ENCODE measurements at regions of chr14 and their contacts with region 1.

Region 1: DNA sequence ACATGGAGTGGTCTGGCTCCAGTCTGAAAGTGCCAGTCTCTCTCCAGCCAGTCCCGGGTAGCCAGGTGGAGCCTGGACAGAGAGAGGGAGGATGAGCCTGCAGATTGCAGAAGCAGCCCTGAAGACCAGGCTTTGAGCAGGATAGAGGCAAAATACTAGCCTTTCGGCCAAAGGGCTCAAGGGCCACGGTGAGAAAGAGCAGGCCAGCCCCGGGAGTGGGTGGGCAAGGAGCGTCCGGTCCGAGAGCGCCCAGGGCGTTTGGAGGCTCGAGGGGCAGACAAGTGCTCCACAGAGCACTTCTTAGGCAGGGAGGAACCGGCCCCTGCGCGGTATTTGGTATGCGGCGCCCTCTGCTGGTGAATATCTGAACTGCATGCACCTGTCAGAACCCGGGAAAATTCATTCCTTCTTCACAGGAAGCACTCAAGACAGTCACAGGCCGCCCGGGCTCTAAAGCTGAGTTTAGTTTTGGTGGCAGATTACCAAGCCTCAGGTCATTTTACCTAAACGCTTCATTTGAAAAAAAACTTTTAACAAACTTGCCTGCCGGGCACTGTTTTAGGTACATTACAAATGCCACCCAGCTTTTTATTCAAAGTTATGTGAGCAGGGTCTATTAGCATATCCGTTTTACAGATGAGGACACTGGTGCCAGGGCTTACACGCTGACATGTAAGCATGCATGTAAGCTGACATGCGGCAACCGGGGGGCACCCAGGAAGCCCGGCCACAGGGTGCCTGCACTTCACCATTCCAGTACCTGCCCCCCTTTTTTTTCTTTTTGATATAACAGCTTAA is 21.0 kb upstream of the PSMC1 start:
- DNase-seq: no peak
- H3K4me3 ChIP-seq: no peak overlapping the region
- CTCF ChIP-seq: peak; percentile 78

Region 2: DNA sequence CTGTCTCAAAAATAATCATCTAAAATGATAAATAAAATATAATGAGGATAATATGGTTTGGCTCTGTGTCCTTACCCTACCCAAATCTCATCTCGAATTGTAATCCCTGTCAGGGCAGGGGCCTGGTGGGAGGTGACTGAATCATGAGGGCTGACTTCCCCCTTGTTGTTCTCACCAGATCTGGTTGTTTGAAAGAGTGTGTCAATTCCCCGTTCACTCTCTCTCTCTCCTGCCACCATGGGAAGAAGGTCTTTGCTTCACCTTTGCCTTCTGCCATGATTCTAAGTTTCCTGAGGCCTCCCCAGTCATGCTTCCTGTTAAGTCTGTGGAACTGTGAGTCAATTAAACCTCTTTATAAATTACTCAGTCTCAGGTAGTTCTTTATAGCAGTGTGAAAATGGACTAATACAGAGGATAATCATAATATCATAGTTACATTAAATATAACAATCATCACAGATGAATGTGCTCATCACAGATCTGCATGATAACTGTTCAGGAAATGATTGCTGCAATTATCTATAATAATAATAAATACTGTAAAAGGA is 293.5 kb before region 1 on chr14:
- CTCF ChIA-PET with region 1: interaction called, 33 read pairs
- POLR2A ChIA-PET with region 1: no interaction called
- DNase-seq: no peak
- H3K4me3 ChIP-seq: no peak overlapping the region
- CTCF ChIP-seq: no peak

Region 3: DNA sequence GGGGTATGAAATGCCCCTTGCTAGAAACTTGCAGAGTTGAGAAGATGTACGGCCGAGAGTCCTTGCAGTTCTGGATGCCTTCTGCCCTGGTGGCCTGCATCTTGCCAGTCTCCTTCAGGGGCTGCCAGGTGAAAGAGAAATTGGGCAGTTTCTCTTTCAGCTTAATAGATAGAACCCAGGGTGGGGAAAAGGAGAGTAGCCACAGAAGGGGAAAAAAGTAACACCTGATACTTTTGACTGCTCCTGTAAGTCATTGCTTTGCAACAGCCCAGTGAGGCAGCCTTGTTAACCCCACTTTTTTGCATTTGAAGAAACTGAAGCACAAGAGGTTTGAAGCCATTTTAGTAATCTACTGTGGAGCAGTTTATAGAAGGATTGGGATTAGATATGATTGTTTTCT is 252.0 kb before region 1 on chr14:
- CTCF ChIA-PET with region 1: interaction called, 347 read pairs
- POLR2A ChIA-PET with region 1: no interaction called
- DNase-seq: no peak
- H3K4me3 ChIP-seq: no peak overlapping the region
- CTCF ChIP-seq: no peak

Region 4: GRCh38 chr14:89988787-89989186 is 246.6 kb before region 1 on chr14:
- CTCF ChIA-PET with region 1: interaction called, 12 read pairs
- POLR2A ChIA-PET with region 1: no interaction called
- DNase-seq: no peak
- H3K4me3 ChIP-seq: no peak overlapping the region
- CTCF ChIP-seq: no peak

Region 5: DNA sequence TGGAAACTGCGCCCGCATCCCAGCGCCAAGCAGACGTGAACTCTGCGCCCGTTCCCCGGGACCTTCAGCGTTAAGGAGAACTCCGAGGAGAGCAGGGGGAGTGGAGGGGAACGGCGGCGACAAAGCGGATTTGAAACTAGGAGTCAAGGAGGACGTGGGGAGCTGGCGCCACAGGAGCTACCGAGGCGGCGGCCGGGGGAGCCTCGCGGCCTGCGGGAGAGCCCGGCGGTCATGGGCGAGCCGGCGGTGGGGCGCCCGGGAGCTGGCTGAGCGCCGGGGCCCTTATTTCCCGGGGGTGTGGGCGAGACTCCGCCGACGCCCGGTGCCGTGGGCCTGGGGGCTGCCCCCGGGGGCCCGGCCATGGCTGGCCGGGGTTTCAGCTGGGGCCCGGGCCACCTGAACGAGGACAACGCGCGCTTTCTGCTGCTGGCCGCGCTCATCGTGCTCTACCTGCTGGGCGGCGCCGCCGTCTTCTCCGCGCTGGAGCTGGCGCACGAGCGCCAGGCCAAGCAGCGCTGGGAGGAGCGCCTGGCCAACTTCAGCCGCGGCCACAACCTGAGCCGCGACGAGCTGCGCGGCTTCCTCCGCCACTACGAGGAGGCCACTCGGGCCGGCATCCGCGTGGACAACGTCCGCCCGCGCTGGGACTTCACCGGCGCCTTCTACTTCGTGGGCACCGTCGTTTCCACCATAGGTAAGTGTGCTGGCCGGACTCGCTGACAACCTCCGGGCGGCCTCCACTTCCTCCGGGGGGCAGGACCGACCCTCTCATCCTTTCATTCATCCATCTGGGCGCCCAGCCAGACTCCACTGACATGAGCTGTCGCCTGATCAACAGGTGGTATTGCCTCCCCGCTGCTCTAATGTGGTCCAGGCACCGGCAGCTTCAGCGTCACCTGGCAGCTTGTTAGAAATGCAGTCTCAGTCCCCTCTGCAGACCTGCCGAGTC is 173.3 kb before region 1 on chr14 and contains the start of gene KCNK13:
- CTCF ChIA-PET with region 1: interaction called, 14 read pairs
- POLR2A ChIA-PET with region 1: no interaction called
- DNase-seq: no peak
- H3K4me3 ChIP-seq: peak within 1 kb of the TSS; percentile 55
- CTCF ChIP-seq: no peak

Region 6: GRCh38 chr14:90256354-90257131 is 21.2 kb after region 1 on chr14 and contains the start of gene PSMC1:
- CTCF ChIA-PET with region 1: interaction called, 19 read pairs
- POLR2A ChIA-PET with region 1: no interaction called
- DNase-seq: peak; percentile 73
- H3K4me3 ChIP-seq: peak within 1 kb of the TSS; percentile 80
- CTCF ChIP-seq: no peak

Region 7: GRCh38 chr14:90483571-90483974 is 248.2 kb after region 1 on chr14:
- CTCF ChIA-PET with region 1: no interaction called
- POLR2A ChIA-PET with region 1: no interaction called
- DNase-seq: no peak
- H3K4me3 ChIP-seq: no peak overlapping the region
- CTCF ChIP-seq: no peak

Measured in AG04449 (cell line).